Activated CD4-positive, alpha-beta T cell treated with anti-CD3 and anti-CD28 coated beads, Interleukin-2, amount 10 ng/mL, durations not matched to agents 7 days and 5 days (primary cell): ENCODE measurements at regions of chr17 and their contacts with region 1.

Region 1: DNA sequence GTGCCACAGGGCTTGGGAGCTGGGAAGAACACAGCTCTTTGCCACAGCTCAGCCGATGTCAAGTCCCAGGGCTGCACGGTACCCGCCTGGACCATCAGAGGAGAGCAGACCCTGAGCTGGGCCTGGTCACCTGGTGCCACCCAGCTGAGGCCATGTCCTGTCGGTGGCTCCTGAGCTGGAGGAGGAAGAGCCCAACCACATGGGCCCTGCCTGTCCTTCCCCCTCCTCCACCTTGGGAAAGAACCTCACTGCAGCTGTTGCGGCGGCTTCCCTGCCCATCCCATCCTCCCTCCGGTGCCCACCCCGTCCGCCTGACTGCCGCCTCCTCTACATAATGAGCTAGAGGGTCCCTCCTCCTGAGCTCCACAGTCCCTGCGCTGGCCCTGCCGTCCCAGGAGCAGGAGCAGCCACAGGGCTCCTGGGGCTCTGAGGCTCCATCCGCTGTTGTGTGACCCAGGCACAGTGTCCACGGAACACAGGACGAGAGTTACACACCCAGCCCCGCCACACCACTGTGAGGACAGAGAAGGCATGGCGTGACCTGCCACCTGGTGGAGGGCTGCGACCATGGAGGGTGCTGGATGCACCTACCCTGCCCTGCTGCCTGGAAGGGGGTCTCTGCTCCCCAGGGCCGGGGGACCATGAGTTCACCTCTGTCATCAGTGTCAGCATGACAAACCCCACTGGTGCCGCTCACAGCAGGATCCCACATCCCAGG is 21.4 kb upstream of the CHMP6 start:
- DNase-seq: peak; percentile 61
- H3K4me3 Mint-ChIP-seq: no peak overlapping the region
- H3K27ac Mint-ChIP-seq: peak overlapping the region; percentile 57
- H3K4me1 Mint-ChIP-seq: peaks cover 9% of the 10 kb centered on the region
- H3K27me3 Mint-ChIP-seq: peaks cover 4% of the 10 kb centered on the region

Region 2: GRCh38 chr17:80426681-80427326 is 543.4 kb before region 1 on chr17:
- CTCF ChIA-PET with region 1: interaction called, 14 read pairs
- POLR2A ChIA-PET with region 1: no interaction called
- DNase-seq: peak; percentile 90
- H3K4me3 Mint-ChIP-seq: no peak overlapping the region
- H3K27ac Mint-ChIP-seq: no peak overlapping the region
- H3K4me1 Mint-ChIP-seq: peaks cover 17% of the 10 kb centered on the region
- H3K27me3 Mint-ChIP-seq: no peaks in the 10 kb centered on the region